ENCODE measurements at regions of chr1 and their contacts with region 1.

Region 1: DNA sequence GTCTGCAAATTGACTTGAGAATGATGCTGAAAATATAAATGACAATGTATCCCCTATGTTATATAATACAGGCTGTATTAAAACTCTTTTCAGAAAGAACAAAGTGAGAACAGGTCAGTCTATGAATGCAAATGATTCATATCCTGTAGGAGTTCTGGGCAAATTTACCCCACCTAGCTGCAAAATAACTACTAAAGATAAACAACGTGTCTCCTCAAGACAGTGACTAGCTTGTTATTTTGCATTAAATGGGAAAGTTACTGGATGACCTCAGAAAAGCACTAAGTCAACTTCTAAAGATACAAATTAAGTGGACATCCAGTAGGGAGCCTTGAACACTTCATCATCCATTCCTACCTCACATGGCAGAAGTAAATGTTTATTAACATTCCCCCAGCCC is 11.1 kb downstream of the RNF19B start:
- DNase-seq: peak; percentile 91
- H3K4me3 ChIP-seq: no peak overlapping the region
- H3K27ac ChIP-seq: peak overlapping the region; percentile 45
- H3K4me1 ChIP-seq: peaks cover 20% of the 10 kb centered on the region
- H3K27me3 ChIP-seq: no peaks in the 10 kb centered on the region
- CTCF ChIP-seq: no peak
- POLR2A ChIP-seq: no peak

Region 2: GRCh38 chr1:32426489-32427255 is 526.8 kb before region 1 on chr1:
- CTCF ChIA-PET with region 1: no interaction called
- POLR2A ChIA-PET with region 1: no interaction called
- dilution Hi-C with region 1: no loop called
- intact Hi-C with region 1: no loop called
- DNase-seq: no peak
- H3K4me3 ChIP-seq: no peak overlapping the region
- H3K27ac ChIP-seq: no peak overlapping the region
- H3K4me1 ChIP-seq: no peaks in the 10 kb centered on the region
- H3K27me3 ChIP-seq: peaks cover 48 to 50% of the 10 kb centered on the region in 2 experiments
- CTCF ChIP-seq: no peak
- POLR2A ChIP-seq: no peak

Region 3: GRCh38 chr1:32939655-32940371 is 13.7 kb before region 1 on chr1:
- CTCF ChIA-PET with region 1: interaction called, 50 read pairs
- POLR2A ChIA-PET with region 1: no interaction called
- dilution Hi-C with region 1: no loop called
- intact Hi-C with region 1: loop called (anchors 1 kb)
- DNase-seq: peak; percentile 87
- H3K4me3 ChIP-seq: no peak overlapping the region
- H3K27ac ChIP-seq: peak overlapping the region; percentile 6
- H3K4me1 ChIP-seq: peaks cover 40% of the 10 kb centered on the region
- H3K27me3 ChIP-seq: no peaks in the 10 kb centered on the region
- CTCF ChIP-seq: no peak
- POLR2A ChIP-seq: no peak